HepG2 (cell line): ENCODE measurements at regions of chr16 and their contacts with region 1.

Region 1: GRCh38 chr16:11797166-11797956 is at the start of gene ZC3H7A:
- DNase-seq: peak; percentile 98
- ATAC-seq: peak; percentile 96
- H3K4me3 ChIP-seq: peak within 1 kb of the TSS; percentile 79 to 100 (median 91)
- H3K27ac ChIP-seq: peak within 1 kb of the TSS; percentile 85
- H3K4me1 ChIP-seq: peaks cover 78% of the 10 kb centered on the region
- H3K27me3 ChIP-seq: no peaks in the 10 kb centered on the region; a peak in 1 of 5 replicates
- CTCF ChIP-seq: peak; percentile 80
- EP300 ChIP-seq: 0 out of 4 replicates have a peak, but pooled peaks of 1 of the 2 experiments have one; percentile 5
- POLR2A ChIP-seq: peak; percentile 100
- RAD21 ChIP-seq: peak; percentile 90
- total RNA-seq, gene ZC3H7A: 29.2 and 51.5 TPM in 2 replicates

Region 2: GRCh38 chr16:11530171-11530940 is 267.0 kb before region 1 on chr16:
- CTCF ChIA-PET with region 1: no interaction called
- POLR2A ChIA-PET with region 1: interaction called, 12 read pairs
- in situ Hi-C with region 1: no loop called
- intact Hi-C with region 1: no loop called
- DNase-seq: peak; percentile 27
- ATAC-seq: no peak
- H3K4me3 ChIP-seq: no peak overlapping the region
- H3K27ac ChIP-seq: no peak overlapping the region
- H3K4me1 ChIP-seq: peaks cover 21% of the 10 kb centered on the region
- H3K27me3 ChIP-seq: peaks cover 0 to 4% of the 10 kb centered on the region in 2 experiments; a peak in 3 of 5 replicates
- CTCF ChIP-seq: no peak
- EP300 ChIP-seq: no peak
- POLR2A ChIP-seq: no peak
- RAD21 ChIP-seq: no peak

Region 3: DNA sequence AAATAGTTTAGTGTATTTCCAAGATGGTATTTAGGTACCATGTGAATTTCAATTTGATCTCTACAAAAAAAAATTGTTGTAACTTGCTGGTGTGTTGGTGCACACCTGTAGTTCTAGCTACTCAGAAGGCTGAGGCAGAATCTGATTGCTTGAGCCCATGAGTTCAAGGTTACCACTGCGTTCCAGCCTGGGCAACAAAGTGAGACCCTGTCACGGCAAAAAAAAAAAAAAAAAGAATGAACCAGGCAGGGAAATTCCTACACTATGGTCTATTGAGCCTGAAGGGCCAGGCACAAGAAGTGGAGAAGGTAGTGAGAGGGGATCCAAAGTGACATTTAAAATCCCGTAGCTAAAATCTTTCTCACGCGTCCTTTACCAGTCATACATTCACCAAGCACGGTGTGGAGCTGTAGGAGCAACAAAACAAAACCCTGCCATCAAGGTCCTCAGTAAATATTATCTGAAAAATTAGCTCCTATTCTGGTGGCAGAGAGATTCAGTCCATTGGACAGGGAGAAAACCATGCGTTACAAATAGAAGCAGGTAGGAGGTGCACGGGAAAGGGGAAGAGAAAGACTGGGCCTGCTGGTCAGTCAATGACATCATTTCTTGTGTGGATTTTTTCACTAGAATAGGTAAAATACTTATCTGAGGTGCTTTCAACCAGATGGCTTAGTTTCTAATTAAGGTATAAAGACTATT is 82.0 kb before region 1 on chr16:
- CTCF ChIA-PET with region 1: no interaction called
- POLR2A ChIA-PET with region 1: interaction called, 15 read pairs
- in situ Hi-C with region 1: no loop called
- intact Hi-C with region 1: no loop called
- DNase-seq: peak; percentile 15
- ATAC-seq: peak; percentile 35
- H3K4me3 ChIP-seq: no peak overlapping the region
- H3K27ac ChIP-seq: peak overlapping the region; percentile 34
- H3K4me1 ChIP-seq: peaks cover 41% of the 10 kb centered on the region
- H3K27me3 ChIP-seq: no peaks in the 10 kb centered on the region
- CTCF ChIP-seq: peak; percentile 20; the same call in 1 of the 2 replicates
- EP300 ChIP-seq: no peak
- POLR2A ChIP-seq: no peak
- RAD21 ChIP-seq: no peak

Region 4: DNA sequence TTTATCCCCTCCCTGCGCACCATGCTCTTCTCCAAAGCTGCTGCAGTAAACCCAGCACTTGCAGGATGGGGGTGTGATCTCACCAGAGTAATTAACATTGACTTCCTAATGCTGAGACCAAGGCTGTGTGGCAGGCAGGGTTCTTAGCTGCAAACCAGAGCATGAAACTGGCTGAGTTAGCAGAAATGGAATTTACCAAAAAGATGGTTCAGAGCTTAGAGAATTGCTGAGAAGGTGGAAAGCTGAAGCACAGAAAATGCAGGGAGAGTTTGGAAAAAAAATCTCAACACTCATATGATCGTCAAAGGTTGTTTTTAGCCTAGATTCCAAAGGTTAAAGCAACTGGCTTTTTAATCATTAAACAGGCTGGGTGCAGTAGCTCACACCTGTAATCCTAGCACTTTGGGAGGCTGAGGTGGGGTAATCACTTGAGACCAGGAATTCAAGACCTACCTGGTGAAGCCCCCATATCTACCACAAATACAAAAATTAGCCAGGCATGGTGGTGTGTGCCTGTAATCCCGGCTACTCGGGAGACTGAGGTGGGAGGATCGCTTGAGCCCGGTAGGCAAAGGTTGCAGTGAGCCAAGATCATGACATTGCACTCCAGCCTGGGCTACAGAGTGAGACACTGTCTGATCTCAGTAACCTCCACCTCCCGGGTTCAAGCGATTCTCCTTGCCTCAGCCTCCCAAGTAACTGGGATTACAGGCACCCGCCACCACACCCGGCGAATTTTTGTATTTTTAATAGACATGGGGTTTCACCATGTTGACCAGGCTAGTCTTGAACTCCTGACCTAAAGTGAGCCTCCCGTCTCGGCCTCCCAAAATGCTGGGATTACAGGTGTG is 48.7 kb before region 1 on chr16:
- CTCF ChIA-PET with region 1: no interaction called
- POLR2A ChIA-PET with region 1: interaction called, 207 read pairs
- in situ Hi-C with region 1: no loop called
- intact Hi-C with region 1: no loop called
- DNase-seq: peak; percentile 93
- ATAC-seq: peak; percentile 80
- H3K4me3 ChIP-seq: peak overlapping the region; percentile 38 to 57 (median 45); a peak in 5 of 6 replicates
- H3K27ac ChIP-seq: peak overlapping the region; percentile 83
- H3K4me1 ChIP-seq: peaks cover 69% of the 10 kb centered on the region
- H3K27me3 ChIP-seq: no peaks in the 10 kb centered on the region
- CTCF ChIP-seq: 0 out of 2 replicates have a peak, but pooled peaks have one; percentile 6
- EP300 ChIP-seq: peak in 1 of 2 experiments; percentile 68; a peak in 2 of 4 replicates
- POLR2A ChIP-seq: 0 out of 4 replicates have a peak, but pooled peaks of 1 of the 2 experiments have one; percentile 47
- RAD21 ChIP-seq: peak; percentile 28; the same call in 1 of the 2 replicates

Region 5: DNA sequence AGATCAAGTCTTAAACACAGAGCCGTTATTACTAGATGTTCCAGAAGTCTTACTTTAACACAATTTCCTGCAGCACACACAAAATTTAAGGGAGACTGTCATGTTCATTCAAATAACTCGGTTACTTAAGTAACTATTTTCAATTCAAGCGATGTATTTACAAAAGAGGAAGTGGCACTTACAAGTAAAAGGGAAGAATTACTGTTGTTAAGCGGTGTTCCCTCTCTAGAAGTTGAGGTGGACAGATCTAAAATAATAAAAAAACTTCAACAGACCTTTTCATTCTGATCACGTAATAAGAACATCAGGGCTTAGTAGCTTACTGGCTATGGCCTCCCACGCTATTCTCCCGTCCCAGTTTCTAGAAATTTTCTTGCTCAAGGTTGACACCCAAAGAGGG is 28.5 kb before region 1 on chr16:
- CTCF ChIA-PET with region 1: no interaction called
- POLR2A ChIA-PET with region 1: interaction called, 12 read pairs
- in situ Hi-C with region 1: no loop called
- intact Hi-C with region 1: no loop called
- DNase-seq: no peak
- ATAC-seq: no peak
- H3K4me3 ChIP-seq: no peak overlapping the region
- H3K27ac ChIP-seq: no peak overlapping the region
- H3K4me1 ChIP-seq: no peaks in the 10 kb centered on the region
- H3K27me3 ChIP-seq: no peaks in the 10 kb centered on the region
- CTCF ChIP-seq: no peak
- EP300 ChIP-seq: no peak
- POLR2A ChIP-seq: no peak
- RAD21 ChIP-seq: no peak

Region 6: GRCh38 chr16:11783319-11784037 is 13.9 kb before region 1 on chr16:
- CTCF ChIA-PET with region 1: no interaction called
- POLR2A ChIA-PET with region 1: interaction called, 35 read pairs
- in situ Hi-C with region 1: no loop called
- intact Hi-C with region 1: loop called (anchors 1 kb)
- DNase-seq: no peak
- ATAC-seq: no peak
- H3K4me3 ChIP-seq: no peak overlapping the region
- H3K27ac ChIP-seq: peak overlapping the region; percentile 9
- H3K4me1 ChIP-seq: peaks cover 68% of the 10 kb centered on the region
- H3K27me3 ChIP-seq: no peaks in the 10 kb centered on the region
- CTCF ChIP-seq: no peak
- EP300 ChIP-seq: no peak
- POLR2A ChIP-seq: no peak
- RAD21 ChIP-seq: no peak

Region 7: GRCh38 chr16:11851294-11852091 is 54.1 kb after region 1 on chr16 and contains the start of gene RSL1D1:
- CTCF ChIA-PET with region 1: no interaction called
- POLR2A ChIA-PET with region 1: interaction called, 40 read pairs
- in situ Hi-C with region 1: no loop called
- intact Hi-C with region 1: no loop called
- DNase-seq: peak; percentile 94
- ATAC-seq: peak; percentile 87
- H3K4me3 ChIP-seq: peak within 1 kb of the TSS; percentile 80 to 99 (median 99)
- H3K27ac ChIP-seq: peak within 1 kb of the TSS; percentile 87
- H3K4me1 ChIP-seq: peaks cover 63% of the 10 kb centered on the region
- H3K27me3 ChIP-seq: no peaks in the 10 kb centered on the region; a peak in 2 of 5 replicates
- CTCF ChIP-seq: no peak
- EP300 ChIP-seq: peak in 1 of 2 experiments; percentile 38; a peak in 3 of 4 replicates
- POLR2A ChIP-seq: peak; percentile 99
- RAD21 ChIP-seq: peak; percentile 7; the same call in 1 of the 2 replicates
- total RNA-seq, gene RSL1D1: 343 and 502 TPM in 2 replicates